Activated B cell treated with CpG ODN at 0.5 μM for 24 hours (primary cell): ENCODE measurements at regions of chr6 and their contacts with region 1.

Region 1: GRCh38 chr6:32439602-32440214 is at the start of gene HLA-DRA:
- DNase-seq: no peak
- ATAC-seq: peak; percentile 72
- H3K4me3 Mint-ChIP-seq: peak within 1 kb of the TSS; percentile 96
- H3K27ac Mint-ChIP-seq: peak within 1 kb of the TSS; percentile 98
- H3K4me1 Mint-ChIP-seq: peaks cover 80% of the 10 kb centered on the region
- H3K27me3 Mint-ChIP-seq: no peaks in the 10 kb centered on the region
- CTCF ChIP-seq: no peak
- total RNA-seq, gene HLA-DRA: 2,835 and 3,035 TPM in 2 replicates

Region 2: DNA sequence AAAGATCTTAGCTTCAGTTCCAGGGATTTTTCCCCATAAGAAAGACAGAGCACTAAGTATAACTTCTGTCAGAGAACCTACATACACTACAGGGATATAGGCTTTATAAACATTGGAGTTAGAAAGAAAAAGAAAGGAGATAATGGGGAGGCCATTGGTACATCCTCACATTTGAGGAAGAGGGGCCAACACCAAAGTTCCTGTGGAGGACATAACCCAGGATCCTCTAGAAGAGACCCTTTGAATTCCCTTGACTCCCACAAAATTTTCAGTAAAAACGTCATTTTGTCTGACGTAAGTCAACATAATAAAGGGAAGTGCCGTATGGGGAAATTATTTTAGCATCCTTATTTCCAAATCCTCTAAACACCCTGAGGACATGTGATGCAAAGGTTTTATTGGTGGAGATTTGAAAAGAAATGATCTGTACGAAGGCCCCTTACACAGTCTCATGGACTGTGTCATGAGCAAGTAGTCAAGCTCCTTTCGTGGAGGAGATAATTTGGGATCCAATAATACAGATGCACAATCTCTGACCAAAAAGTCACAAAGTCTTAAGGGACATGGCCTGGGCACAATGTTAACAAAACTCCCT is 33.2 kb after region 1 on chr6:
- CTCF ChIA-PET with region 1: no interaction called
- POLR2A ChIA-PET with region 1: interaction called, 31 read pairs
- intact Hi-C with region 1: loop called (anchors 2 kb)
- DNase-seq: no peak
- ATAC-seq: peak; percentile 16
- H3K4me3 Mint-ChIP-seq: peak overlapping the region; percentile 80
- H3K27ac Mint-ChIP-seq: peak overlapping the region; percentile 99
- H3K4me1 Mint-ChIP-seq: peaks cover 36% of the 10 kb centered on the region
- H3K27me3 Mint-ChIP-seq: no peaks in the 10 kb centered on the region
- CTCF ChIP-seq: no peak

Region 3: GRCh38 chr6:32609731-32610640 is 170.3 kb after region 1 on chr6:
- CTCF ChIA-PET with region 1: no interaction called
- POLR2A ChIA-PET with region 1: interaction called, 17 read pairs
- intact Hi-C with region 1: no loop called
- DNase-seq: no peak
- ATAC-seq: peak; percentile 84
- H3K4me3 Mint-ChIP-seq: no peak overlapping the region
- H3K27ac Mint-ChIP-seq: no peak overlapping the region
- H3K4me1 Mint-ChIP-seq: peaks cover 56% of the 10 kb centered on the region
- H3K27me3 Mint-ChIP-seq: no peaks in the 10 kb centered on the region
- CTCF ChIP-seq: no peak

Region 4: GRCh38 chr6:32642720-32643106 is 203.0 kb after region 1 on chr6:
- CTCF ChIA-PET with region 1: no interaction called
- POLR2A ChIA-PET with region 1: interaction called, 103 read pairs
- intact Hi-C with region 1: no loop called
- DNase-seq: no peak
- ATAC-seq: no peak
- H3K4me3 Mint-ChIP-seq: peak overlapping the region; percentile 100
- H3K27ac Mint-ChIP-seq: peak overlapping the region; percentile 77
- H3K4me1 Mint-ChIP-seq: peaks cover 61% of the 10 kb centered on the region
- H3K27me3 Mint-ChIP-seq: no peaks in the 10 kb centered on the region
- CTCF ChIP-seq: no peak

Region 5: DNA sequence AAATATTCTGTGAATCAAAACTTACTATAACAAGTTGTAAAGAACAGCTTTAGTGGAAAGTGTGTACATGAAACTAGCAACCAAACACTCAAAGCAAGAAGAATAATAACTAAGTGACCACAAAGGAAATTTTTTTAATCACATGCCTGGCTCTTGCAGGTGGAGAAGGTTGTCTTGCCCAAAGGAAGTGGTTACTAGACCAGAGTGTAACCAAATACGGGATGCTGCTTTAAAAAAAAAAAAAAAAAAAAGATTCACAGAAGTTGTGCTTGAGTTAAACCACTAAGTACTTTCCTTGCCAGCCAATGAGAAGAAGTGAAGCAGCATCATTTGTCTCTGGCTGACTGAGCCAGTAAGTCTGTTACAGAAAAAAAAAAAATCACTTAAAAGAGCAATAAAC is 245.9 kb after region 1 on chr6:
- CTCF ChIA-PET with region 1: interaction called, 3 read pairs
- POLR2A ChIA-PET with region 1: interaction called, 90 read pairs
- intact Hi-C with region 1: no loop called
- DNase-seq: no peak
- ATAC-seq: peak; percentile 70
- H3K4me3 Mint-ChIP-seq: peak overlapping the region; percentile 58
- H3K27ac Mint-ChIP-seq: peak overlapping the region; percentile 93
- H3K4me1 Mint-ChIP-seq: peaks cover 84% of the 10 kb centered on the region
- H3K27me3 Mint-ChIP-seq: no peaks in the 10 kb centered on the region
- CTCF ChIP-seq: no peak

Region 6: GRCh38 chr6:32843979-32844838 is 404.5 kb after region 1 on chr6 and contains the start of gene PSMB8:
- CTCF ChIA-PET with region 1: no interaction called
- POLR2A ChIA-PET with region 1: interaction called, 13 read pairs
- intact Hi-C with region 1: no loop called
- DNase-seq: peak; percentile 96
- ATAC-seq: peak; percentile 78
- H3K4me3 Mint-ChIP-seq: peak within 1 kb of the TSS; percentile 99
- H3K27ac Mint-ChIP-seq: peak within 1 kb of the TSS; percentile 100
- H3K4me1 Mint-ChIP-seq: peaks cover 92% of the 10 kb centered on the region
- H3K27me3 Mint-ChIP-seq: no peaks in the 10 kb centered on the region
- CTCF ChIP-seq: no peak
- total RNA-seq, gene PSMB8: 182 and 194 TPM in 2 replicates